Activated CD8-positive, alpha-beta T cell treated with anti-CD3 and anti-CD28 coated beads for 36 hours (primary cell): ENCODE measurements at regions of chr3 and their contacts with region 1.

Region 1: GRCh38 chr3:12663936-12664908 is at the start of gene RAF1:
- DNase-seq: peak; percentile 99
- ATAC-seq: peak; percentile 94
- H3K4me3 Mint-ChIP-seq: peak within 1 kb of the TSS; percentile 85
- H3K27ac Mint-ChIP-seq: peak within 1 kb of the TSS; percentile 90
- H3K4me1 Mint-ChIP-seq: peaks cover 29% of the 10 kb centered on the region
- H3K27me3 Mint-ChIP-seq: no peaks in the 10 kb centered on the region
- CTCF ChIP-seq: no peak
- total RNA-seq, gene RAF1: 71.1 to 74.9 TPM

Region 2: DNA sequence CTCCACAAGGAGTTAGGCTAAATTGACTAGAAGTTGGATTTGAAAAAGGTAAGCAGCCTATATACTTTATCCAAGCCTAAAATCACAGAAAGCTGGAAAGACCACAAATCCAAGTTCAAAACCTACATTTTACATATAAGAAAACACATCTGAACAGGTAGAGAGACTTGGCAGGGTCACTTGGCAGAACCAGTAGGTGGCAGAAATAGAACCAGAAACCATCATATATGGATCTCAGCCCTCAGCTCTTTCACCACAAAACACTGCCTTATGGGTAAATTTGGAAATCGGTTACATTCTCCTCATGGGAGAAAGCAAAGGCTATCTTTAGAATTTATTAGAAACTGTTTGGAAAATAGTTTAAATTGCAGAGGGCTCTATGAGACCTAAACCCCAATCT is 63.1 kb before region 1 on chr3:
- CTCF ChIA-PET with region 1: no interaction called
- POLR2A ChIA-PET with region 1: interaction called, 20 read pairs
- intact Hi-C with region 1: no loop called
- DNase-seq: no peak
- ATAC-seq: no peak
- H3K4me3 Mint-ChIP-seq: no peak overlapping the region
- H3K27ac Mint-ChIP-seq: no peak overlapping the region
- H3K4me1 Mint-ChIP-seq: peaks cover 3% of the 10 kb centered on the region
- H3K27me3 Mint-ChIP-seq: no peaks in the 10 kb centered on the region
- CTCF ChIP-seq: no peak

Region 3: GRCh38 chr3:12613250-12613649 is 51.0 kb before region 1 on chr3:
- CTCF ChIA-PET with region 1: interaction called, 3 read pairs
- POLR2A ChIA-PET with region 1: interaction called, 4 read pairs
- intact Hi-C with region 1: loop called (anchors 5 kb)
- DNase-seq: peak; percentile 13
- ATAC-seq: peak; percentile 67
- H3K4me3 Mint-ChIP-seq: no peak overlapping the region
- H3K27ac Mint-ChIP-seq: peak overlapping the region; percentile 41
- H3K4me1 Mint-ChIP-seq: peaks cover 40% of the 10 kb centered on the region
- H3K27me3 Mint-ChIP-seq: no peaks in the 10 kb centered on the region
- CTCF ChIP-seq: no peak

Region 4: GRCh38 chr3:12648384-12648959 is 15.8 kb before region 1 on chr3:
- CTCF ChIA-PET with region 1: interaction called, 4 read pairs
- POLR2A ChIA-PET with region 1: interaction called, 17 read pairs
- intact Hi-C with region 1: no loop called
- DNase-seq: no peak
- ATAC-seq: peak; percentile 56
- H3K4me3 Mint-ChIP-seq: no peak overlapping the region
- H3K27ac Mint-ChIP-seq: peak overlapping the region; percentile 34
- H3K4me1 Mint-ChIP-seq: peaks cover 60% of the 10 kb centered on the region
- H3K27me3 Mint-ChIP-seq: no peaks in the 10 kb centered on the region
- CTCF ChIP-seq: no peak